Gastrocnemius medialis (tissue), 4 donors: ENCODE measurements at regions of chr11 and their contacts with region 1.

Region 1: GRCh38 chr11:77473801-77474683 is at the start of gene PAK1:
- DNase-seq: peak; percentile 65 to 74
- ATAC-seq: peak; percentile 65 to 71
- H3K4me3 ChIP-seq: peak within 1 kb of the TSS; percentile 85 to 97 (median 88)
- H3K27ac ChIP-seq: peak within 1 kb of the TSS; percentile 79 to 92 (median 88)
- H3K4me1 ChIP-seq: peaks cover 0 to 13% of the 10 kb centered on the region in 2 donors
- H3K27me3 ChIP-seq: no peaks in the 10 kb centered on the region
- CTCF ChIP-seq: peak in 2 of 5 experiments; percentile 36 to 44
- POLR2A ChIP-seq: peak in 1 of 2 donors; percentile 5
- total RNA-seq, gene PAK1: 22.3 to 34.4 (median 27.9) TPM

Region 2: GRCh38 chr11:77127232-77127911 is 346.7 kb before region 1 on chr11:
- in situ Hi-C with region 1: no loop called
- intact Hi-C with region 1: loop called (anchors 10 kb)
- DNase-seq: no peak
- ATAC-seq: peak; percentile 55 to 63
- H3K4me3 ChIP-seq: peak overlapping the region; percentile 34 to 65 (median 51)
- H3K27ac ChIP-seq: peak overlapping the region in 1 of 4 donors; percentile 3
- H3K4me1 ChIP-seq: peaks cover 9 to 17% of the 10 kb centered on the region in 2 donors
- H3K27me3 ChIP-seq: no peaks in the 10 kb centered on the region
- CTCF ChIP-seq: peak; percentile 93 to 98 (median 96)
- POLR2A ChIP-seq: no peak

Region 3: GRCh38 chr11:77407618-77408017 is 66.4 kb before region 1 on chr11:
- in situ Hi-C with region 1: no loop called
- intact Hi-C with region 1: loop called (anchors 2 kb)
- DNase-seq: peak; percentile 37 to 64
- ATAC-seq: peak; percentile 74 to 76
- H3K4me3 ChIP-seq: no peak overlapping the region
- H3K27ac ChIP-seq: peak overlapping the region; percentile 65 to 86 (median 73)
- H3K4me1 ChIP-seq: peaks cover 42 to 54% of the 10 kb centered on the region in 2 donors
- H3K27me3 ChIP-seq: no peaks in the 10 kb centered on the region
- CTCF ChIP-seq: no peak
- POLR2A ChIP-seq: no peak